B cell (primary cell): ENCODE measurements at regions of chr1 and their contacts with region 1.

Region 1: DNA sequence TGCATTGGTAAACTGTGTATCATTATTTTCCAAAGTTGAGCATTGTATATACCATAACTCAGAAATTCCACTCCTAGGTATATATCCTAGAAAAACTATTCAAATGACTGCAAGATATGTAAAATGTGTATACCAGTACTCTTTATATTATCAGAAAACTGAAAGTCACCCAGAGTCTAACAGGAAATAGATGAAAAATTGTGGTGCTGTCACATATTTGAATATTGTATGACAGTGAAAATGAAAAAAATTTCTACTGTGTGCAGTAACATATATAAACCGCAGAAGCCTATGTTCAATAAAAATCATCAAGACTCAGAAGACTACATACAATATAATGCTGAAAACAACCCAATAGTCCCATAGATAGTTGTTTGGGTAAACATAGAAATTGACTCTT is 74.4 kb upstream of the LYPLAL1 start:
- DNase-seq: no peak
- ATAC-seq: no peak
- H3K4me3 ChIP-seq: no peak overlapping the region
- H3K4me3 Mint-ChIP-seq: peak overlapping the region; percentile 13
- H3K27ac ChIP-seq: no peak overlapping the region
- H3K27ac Mint-ChIP-seq: peak overlapping the region; percentile 2
- H3K4me1 ChIP-seq: peaks cover 7 to 8% of the 10 kb centered on the region in 2 donors
- H3K4me1 Mint-ChIP-seq: peaks cover 20% of the 10 kb centered on the region
- H3K27me3 ChIP-seq: no peaks in the 10 kb centered on the region
- H3K27me3 Mint-ChIP-seq: no peaks in the 10 kb centered on the region
- CTCF ChIP-seq: no peak

Region 2: GRCh38 chr1:219031809-219032208 is 67.5 kb before region 1 on chr1:
- CTCF ChIA-PET with region 1: no interaction called
- POLR2A ChIA-PET with region 1: no interaction called
- intact Hi-C with region 1: no loop called
- DNase-seq: no peak
- ATAC-seq: no peak
- H3K4me3 ChIP-seq: no peak overlapping the region
- H3K4me3 Mint-ChIP-seq: no peak overlapping the region
- H3K27ac ChIP-seq: no peak overlapping the region
- H3K27ac Mint-ChIP-seq: no peak overlapping the region
- H3K4me1 ChIP-seq: no peaks in the 10 kb centered on the region
- H3K4me1 Mint-ChIP-seq: no peaks in the 10 kb centered on the region
- H3K27me3 ChIP-seq: no peaks in the 10 kb centered on the region
- H3K27me3 Mint-ChIP-seq: no peaks in the 10 kb centered on the region
- CTCF ChIP-seq: no peak

Region 3: DNA sequence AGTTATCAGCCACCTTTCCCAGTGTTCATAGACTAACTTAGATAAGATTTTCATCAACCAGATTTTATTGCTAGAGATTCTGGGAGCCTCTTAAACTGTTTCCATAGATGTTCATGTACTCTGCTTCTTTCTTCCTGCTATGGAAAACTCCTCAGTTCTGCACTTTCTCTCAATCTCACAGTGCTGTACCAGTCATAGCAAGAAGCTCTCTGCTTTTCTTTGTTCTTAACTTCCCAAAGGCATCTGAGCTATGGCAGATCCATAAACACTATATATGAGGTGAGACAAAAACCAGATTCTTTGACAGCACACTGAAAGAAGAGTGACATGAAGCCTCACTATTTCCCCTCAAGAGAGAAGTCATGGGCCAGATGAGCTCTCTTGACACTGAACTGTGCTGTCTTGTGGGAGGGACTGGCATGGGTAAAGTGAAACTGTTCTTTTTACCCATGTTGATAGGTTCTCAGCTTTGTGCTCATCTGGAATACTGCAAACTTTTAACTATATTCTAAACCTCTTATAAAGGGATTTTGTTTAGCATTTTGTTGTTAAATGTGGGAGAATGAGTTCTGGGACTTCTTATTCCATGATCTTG is 10.2 kb after region 1 on chr1:
- CTCF ChIA-PET with region 1: no interaction called
- POLR2A ChIA-PET with region 1: no interaction called
- intact Hi-C with region 1: loop called (anchors 1 kb)
- DNase-seq: no peak
- ATAC-seq: peak; percentile 28
- H3K4me3 ChIP-seq: no peak overlapping the region
- H3K4me3 Mint-ChIP-seq: no peak overlapping the region
- H3K27ac ChIP-seq: no peak overlapping the region
- H3K27ac Mint-ChIP-seq: peak overlapping the region; percentile 26
- H3K4me1 ChIP-seq: no peaks in the 10 kb centered on the region
- H3K4me1 Mint-ChIP-seq: peaks cover 9% of the 10 kb centered on the region
- H3K27me3 ChIP-seq: peaks cover 0 to 4% (median 0%) of the 10 kb centered on the region in 4 experiments
- H3K27me3 Mint-ChIP-seq: no peaks in the 10 kb centered on the region
- CTCF ChIP-seq: no peak

Region 4: DNA sequence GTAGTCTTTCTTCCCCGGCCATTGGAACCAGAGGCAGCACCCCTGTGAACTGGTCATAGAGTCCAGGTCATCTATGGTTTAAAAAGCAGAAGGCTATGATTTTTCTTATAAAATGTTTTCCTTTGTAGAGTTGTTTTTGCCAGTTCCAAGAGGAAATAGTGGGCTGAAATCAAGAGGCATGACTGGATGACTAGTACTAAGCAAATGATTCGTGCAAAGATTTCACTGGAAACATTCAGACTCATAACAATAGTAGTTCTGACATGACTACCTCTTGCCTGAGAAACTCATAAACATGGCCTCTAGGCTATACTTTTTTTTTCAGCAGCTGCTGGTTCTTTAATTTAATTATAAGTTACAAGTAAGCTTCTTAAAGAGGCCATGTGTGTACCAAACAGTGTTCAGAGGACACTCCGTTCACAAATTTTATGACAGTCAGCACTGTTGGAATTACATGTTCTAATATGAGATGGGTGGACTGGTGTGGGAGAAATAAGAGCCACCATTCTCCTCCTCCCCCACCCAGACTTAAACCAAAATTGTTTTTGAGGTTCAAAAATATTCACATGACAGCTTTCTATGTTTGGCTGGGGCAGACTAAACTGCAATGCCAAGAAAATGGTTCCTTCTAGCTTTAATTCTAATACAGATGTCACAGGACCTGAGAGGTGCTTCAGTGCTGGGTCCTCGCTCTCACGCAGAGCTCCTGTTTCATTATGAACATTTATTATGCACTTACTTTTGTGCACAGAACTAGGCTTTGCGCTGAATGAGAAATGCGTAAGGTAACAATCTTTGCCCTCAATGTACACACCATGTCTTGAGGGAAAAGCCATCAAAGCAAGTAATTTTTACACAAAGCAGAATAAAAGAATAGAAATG is 366.1 kb after region 1 on chr1:
- CTCF ChIA-PET with region 1: no interaction called
- POLR2A ChIA-PET with region 1: no interaction called
- intact Hi-C with region 1: no loop called
- DNase-seq: no peak
- ATAC-seq: no peak
- H3K4me3 ChIP-seq: no peak overlapping the region
- H3K4me3 Mint-ChIP-seq: no peak overlapping the region
- H3K27ac ChIP-seq: no peak overlapping the region
- H3K27ac Mint-ChIP-seq: no peak overlapping the region
- H3K4me1 ChIP-seq: peaks cover 8 to 16% of the 10 kb centered on the region in 2 donors
- H3K4me1 Mint-ChIP-seq: peaks cover 27% of the 10 kb centered on the region
- H3K27me3 ChIP-seq: no peaks in the 10 kb centered on the region
- H3K27me3 Mint-ChIP-seq: no peaks in the 10 kb centered on the region
- CTCF ChIP-seq: no peak